B cell (primary cell): ENCODE measurements at regions of chr10 and their contacts with region 1.

Region 1: GRCh38 chr10:35501921-35502320 is 103.2 kb upstream of the GJD4 start:
- DNase-seq: no peak
- ATAC-seq: no peak
- H3K4me3 ChIP-seq: no peak overlapping the region
- H3K4me3 Mint-ChIP-seq: no peak overlapping the region
- H3K27ac ChIP-seq: no peak overlapping the region
- H3K27ac Mint-ChIP-seq: no peak overlapping the region
- H3K4me1 ChIP-seq: peaks cover 33 to 41% of the 10 kb centered on the region in 2 donors
- H3K4me1 Mint-ChIP-seq: peaks cover 48% of the 10 kb centered on the region
- H3K27me3 ChIP-seq: no peaks in the 10 kb centered on the region
- H3K27me3 Mint-ChIP-seq: no peaks in the 10 kb centered on the region
- CTCF ChIP-seq: no peak

Region 2: GRCh38 chr10:35379226-35380137 is 122.4 kb before region 1 on chr10:
- CTCF ChIA-PET with region 1: no interaction called
- POLR2A ChIA-PET with region 1: no interaction called
- intact Hi-C with region 1: no loop called
- DNase-seq: peak; percentile 90
- ATAC-seq: peak; percentile 95
- H3K4me3 ChIP-seq: peak overlapping the region in 4 of 5 experiments; percentile 16 to 42 (median 22)
- H3K4me3 Mint-ChIP-seq: peak overlapping the region; percentile 79
- H3K27ac ChIP-seq: peak overlapping the region; percentile 73 to 84
- H3K27ac Mint-ChIP-seq: peak overlapping the region; percentile 91
- H3K4me1 ChIP-seq: peaks cover 32 to 35% of the 10 kb centered on the region in 2 donors
- H3K4me1 Mint-ChIP-seq: peaks cover 65% of the 10 kb centered on the region
- H3K27me3 ChIP-seq: no peaks in the 10 kb centered on the region
- H3K27me3 Mint-ChIP-seq: no peaks in the 10 kb centered on the region
- CTCF ChIP-seq: peak; percentile 73

Region 3: DNA sequence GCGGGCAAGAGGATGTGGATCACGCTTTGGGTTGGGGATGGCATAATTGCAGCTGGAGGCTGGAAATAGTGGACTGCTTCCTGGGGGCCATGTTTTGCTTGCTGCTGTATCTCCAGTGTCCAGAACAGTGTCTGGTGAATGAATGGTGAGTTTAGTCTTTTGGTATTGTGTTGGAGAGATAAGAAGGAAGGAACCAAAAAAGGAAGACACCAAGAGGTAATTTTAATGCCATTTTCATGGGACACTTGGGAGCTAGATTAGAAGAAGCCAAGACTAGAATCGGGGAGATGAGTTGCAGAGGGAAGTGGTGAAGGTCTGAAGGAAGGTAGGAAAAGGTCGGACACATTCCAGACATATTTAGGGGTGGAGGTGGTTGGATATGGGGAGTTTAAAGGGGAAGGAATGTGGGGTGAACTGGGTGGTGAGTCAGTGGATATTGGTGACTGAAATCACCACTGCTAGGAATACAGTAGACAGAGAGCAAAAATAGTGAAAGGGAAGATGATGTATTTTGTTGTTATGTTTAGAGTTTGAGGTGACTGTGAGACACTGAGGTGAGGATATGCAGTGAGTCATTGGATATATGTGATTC is 88.9 kb before region 1 on chr10:
- CTCF ChIA-PET with region 1: no interaction called
- POLR2A ChIA-PET with region 1: no interaction called
- intact Hi-C with region 1: loop called (anchors 10 kb)
- DNase-seq: no peak
- ATAC-seq: no peak
- H3K4me3 ChIP-seq: no peak overlapping the region
- H3K4me3 Mint-ChIP-seq: no peak overlapping the region
- H3K27ac ChIP-seq: no peak overlapping the region
- H3K27ac Mint-ChIP-seq: no peak overlapping the region
- H3K4me1 ChIP-seq: peaks cover 6 to 19% of the 10 kb centered on the region in 2 donors
- H3K4me1 Mint-ChIP-seq: peaks cover 63% of the 10 kb centered on the region
- H3K27me3 ChIP-seq: no peaks in the 10 kb centered on the region
- H3K27me3 Mint-ChIP-seq: no peaks in the 10 kb centered on the region
- CTCF ChIP-seq: no peak

Region 4: DNA sequence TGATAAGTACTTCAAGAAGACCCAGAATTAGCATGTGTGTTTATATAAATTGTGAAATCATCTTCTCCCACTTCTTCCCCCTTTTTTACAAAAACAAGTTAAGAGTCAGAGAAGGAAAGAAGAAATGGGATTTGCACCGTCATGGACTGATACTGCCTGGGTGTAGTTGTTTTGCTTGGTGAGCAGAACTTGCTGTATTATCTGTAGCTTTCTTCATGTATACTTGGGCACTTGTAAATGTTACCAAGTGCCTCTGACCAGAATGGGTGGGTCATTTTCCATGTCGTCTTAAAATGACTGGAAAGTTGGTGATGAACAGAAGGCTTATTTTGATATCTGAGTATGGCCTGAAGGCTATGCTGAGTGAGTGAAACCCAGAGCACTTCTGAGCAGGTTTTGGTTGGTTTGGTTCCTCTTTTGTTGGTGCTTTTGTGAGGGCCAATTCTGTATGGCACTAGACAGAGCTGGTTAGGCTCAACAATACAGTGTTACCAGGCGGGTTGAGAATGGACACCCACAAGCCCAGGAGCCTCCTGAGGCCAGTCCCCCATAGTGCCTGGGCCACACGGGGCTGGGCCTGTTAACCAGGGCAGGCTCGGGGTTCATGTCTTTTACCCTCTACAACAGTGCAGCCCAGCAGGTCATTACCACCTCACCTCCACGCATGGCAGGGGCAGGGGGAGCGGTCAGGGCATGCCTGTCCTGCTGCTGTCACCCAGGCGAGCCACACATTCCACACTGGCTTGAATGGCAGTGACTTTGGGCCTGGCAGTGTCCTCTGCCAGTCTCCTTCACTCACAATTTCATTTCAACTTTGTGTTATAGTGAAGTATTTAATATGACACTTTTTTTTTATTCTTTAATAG is 50.5 kb before region 1 on chr10:
- CTCF ChIA-PET with region 1: no interaction called
- POLR2A ChIA-PET with region 1: no interaction called
- intact Hi-C with region 1: loop called (anchors 10 kb)
- DNase-seq: peak; percentile 47
- ATAC-seq: peak; percentile 67
- H3K4me3 ChIP-seq: no peak overlapping the region
- H3K4me3 Mint-ChIP-seq: peak overlapping the region; percentile 75
- H3K27ac ChIP-seq: peak overlapping the region; percentile 2 to 58
- H3K27ac Mint-ChIP-seq: peak overlapping the region; percentile 88
- H3K4me1 ChIP-seq: peaks cover 52 to 57% of the 10 kb centered on the region in 2 donors
- H3K4me1 Mint-ChIP-seq: peaks cover 82% of the 10 kb centered on the region
- H3K27me3 ChIP-seq: no peaks in the 10 kb centered on the region
- H3K27me3 Mint-ChIP-seq: no peaks in the 10 kb centered on the region
- CTCF ChIP-seq: no peak